Mammary epithelial cell (primary cell): ENCODE measurements at regions of chr6 and their contacts with region 1.

Region 1: GRCh38 chr6:106581468-106581997 is 47.8 kb downstream of the RTN4IP1 start:
- DNase-seq: no peak
- H3K4me3 ChIP-seq: no peak overlapping the region
- H3K27ac ChIP-seq: no peak overlapping the region
- H3K4me1 ChIP-seq: peaks cover 4% of the 10 kb centered on the region
- H3K27me3 ChIP-seq: no peaks in the 10 kb centered on the region
- CTCF ChIP-seq: no peak

Region 2: DNA sequence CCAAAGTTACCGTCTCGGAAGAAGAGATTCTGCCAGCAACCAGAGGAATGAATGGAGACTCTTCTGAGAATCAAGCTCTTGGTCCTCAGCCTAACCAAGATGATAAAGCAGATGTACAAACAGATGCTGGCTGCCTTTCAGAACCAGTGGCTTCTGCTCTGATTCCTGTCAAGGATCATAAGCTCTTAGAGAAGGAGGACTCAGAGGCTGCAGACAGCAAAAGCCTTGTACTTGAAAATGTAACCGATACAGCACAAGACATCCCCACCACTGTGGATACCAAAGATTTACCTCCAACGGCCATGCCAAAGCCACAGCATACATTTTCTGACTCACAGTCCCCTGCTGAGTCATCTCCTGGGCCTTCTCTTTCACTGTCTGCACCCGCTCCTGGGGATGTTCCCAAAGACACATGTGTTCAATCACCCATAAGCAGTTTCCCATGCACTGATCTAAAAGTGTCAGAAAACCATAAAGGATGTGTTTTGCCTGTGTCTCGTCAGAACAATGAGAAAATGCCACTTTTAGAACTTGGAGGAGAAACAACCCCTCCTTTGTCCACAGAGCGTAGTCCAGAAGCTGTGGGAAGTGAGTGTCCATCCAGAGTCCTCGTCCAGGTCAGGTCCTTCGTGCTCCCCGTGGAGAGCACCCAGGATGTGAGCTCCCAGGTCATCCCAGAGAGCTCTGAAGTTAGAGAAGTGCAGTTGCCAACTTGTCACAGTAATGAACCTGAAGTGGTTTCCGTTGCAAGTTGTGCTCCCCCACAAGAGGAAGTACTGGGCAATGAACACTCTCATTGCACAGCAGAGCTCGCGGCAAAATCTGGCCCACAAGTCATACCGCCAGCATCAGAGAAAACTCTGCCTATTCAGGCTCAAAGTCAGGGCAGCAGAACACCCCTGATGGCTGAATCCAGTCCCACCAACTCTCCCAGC is 61.8 kb before region 1 on chr6:
- CTCF ChIA-PET with region 1: no interaction called
- dilution Hi-C with region 1: no loop called
- in situ Hi-C with region 1: no loop called
- intact Hi-C with region 1: no loop called
- DNase-seq: peak; percentile 96
- H3K4me3 ChIP-seq: peak overlapping the region in 1 of 3 experiments; percentile 21
- H3K27ac ChIP-seq: peak overlapping the region; percentile 94
- H3K4me1 ChIP-seq: peaks cover 34% of the 10 kb centered on the region
- H3K27me3 ChIP-seq: no peaks in the 10 kb centered on the region
- CTCF ChIP-seq: no peak

Region 3: GRCh38 chr6:106997390-106998158 is 416.0 kb after region 1 on chr6:
- CTCF ChIA-PET with region 1: no interaction called
- dilution Hi-C with region 1: loop called (anchors 5 kb)
- in situ Hi-C with region 1: loop called in 1 of 2 experiments (anchors 25 kb)
- intact Hi-C with region 1: no loop called
- DNase-seq: peak; percentile 49
- H3K4me3 ChIP-seq: no peak overlapping the region
- H3K27ac ChIP-seq: no peak overlapping the region
- H3K4me1 ChIP-seq: no peaks in the 10 kb centered on the region
- H3K27me3 ChIP-seq: no peaks in the 10 kb centered on the region
- CTCF ChIP-seq: peak; percentile 95 to 96